Caco-2 (cell line): ENCODE measurements at regions of chr11 and their contacts with region 1.

Region 1: GRCh38 chr11:10076458-10077141 is 217.4 kb downstream of the SBF2 start:
- DNase-seq: peak; percentile 57 to 63
- H3K4me3 ChIP-seq: no peak overlapping the region
- H3K4me3 Mint-ChIP-seq: no peak overlapping the region
- H3K27ac Mint-ChIP-seq: no peak overlapping the region
- H3K4me1 ChIP-seq: no peaks in the 10 kb centered on the region
- H3K4me1 Mint-ChIP-seq: peaks cover 5% of the 10 kb centered on the region
- H3K27me3 ChIP-seq: no peaks in the 10 kb centered on the region
- H3K27me3 Mint-ChIP-seq: no peaks in the 10 kb centered on the region
- CTCF ChIP-seq: peak; percentile 75 to 88

Region 2: GRCh38 chr11:8754241-8754640 is 1322.4 kb before region 1 on chr11:
- CTCF ChIA-PET with region 1: no interaction called
- POLR2A ChIA-PET with region 1: interaction called, 21 read pairs
- intact Hi-C with region 1: no loop called
- DNase-seq: no peak
- H3K4me3 ChIP-seq: no peak overlapping the region
- H3K4me3 Mint-ChIP-seq: no peak overlapping the region
- H3K27ac Mint-ChIP-seq: no peak overlapping the region
- H3K4me1 ChIP-seq: peaks cover 33% of the 10 kb centered on the region
- H3K4me1 Mint-ChIP-seq: peaks cover 17% of the 10 kb centered on the region
- H3K27me3 ChIP-seq: no peaks in the 10 kb centered on the region
- H3K27me3 Mint-ChIP-seq: no peaks in the 10 kb centered on the region
- CTCF ChIP-seq: no peak

Region 3: GRCh38 chr11:9861860-9862725 is 214.5 kb before region 1 on chr11:
- CTCF ChIA-PET with region 1: interaction called, 3 read pairs
- POLR2A ChIA-PET with region 1: no interaction called
- intact Hi-C with region 1: loop called (anchors 10 kb)
- DNase-seq: peak; percentile 77 to 82
- H3K4me3 ChIP-seq: no peak overlapping the region
- H3K4me3 Mint-ChIP-seq: no peak overlapping the region
- H3K27ac Mint-ChIP-seq: no peak overlapping the region
- H3K4me1 ChIP-seq: peaks cover 60% of the 10 kb centered on the region
- H3K4me1 Mint-ChIP-seq: peaks cover 41% of the 10 kb centered on the region
- H3K27me3 ChIP-seq: no peaks in the 10 kb centered on the region
- H3K27me3 Mint-ChIP-seq: no peaks in the 10 kb centered on the region
- CTCF ChIP-seq: peak; percentile 77 to 87

Region 4: DNA sequence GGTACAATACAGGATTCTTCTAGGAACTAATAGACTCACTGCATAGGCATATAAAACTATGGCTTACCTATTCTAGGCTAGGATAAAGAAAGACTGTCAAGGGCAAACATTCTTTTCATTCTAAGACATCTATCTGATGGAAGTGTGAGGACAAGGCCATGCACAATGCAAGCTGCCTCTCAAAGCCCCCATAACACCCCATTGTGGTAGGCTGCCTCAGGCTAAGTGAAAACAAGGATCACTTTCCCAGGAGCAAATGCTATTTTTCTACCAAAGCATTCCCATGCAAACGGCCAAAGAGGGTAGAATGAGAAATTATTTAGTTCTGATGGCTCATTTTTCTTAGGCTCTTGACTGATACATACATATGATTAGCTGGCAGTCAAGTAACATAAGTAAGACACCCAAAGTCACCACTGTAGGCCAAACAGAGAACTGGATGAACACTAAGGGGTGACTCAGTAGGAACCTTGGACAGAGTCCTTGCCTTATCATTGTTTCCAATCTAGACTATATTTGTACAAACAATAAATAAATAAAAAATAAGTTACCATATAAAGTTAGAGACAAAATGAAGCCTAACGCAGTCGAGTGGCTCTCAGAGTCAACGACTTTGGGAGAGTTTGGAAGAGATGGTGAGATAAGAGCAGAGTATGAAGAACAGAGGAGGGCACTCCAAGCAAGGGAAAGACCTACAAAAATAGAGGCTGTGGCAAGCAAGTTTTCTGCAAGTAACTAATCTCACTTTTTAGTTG is 86.2 kb before region 1 on chr11:
- CTCF ChIA-PET with region 1: no interaction called
- POLR2A ChIA-PET with region 1: no interaction called
- intact Hi-C with region 1: loop called (anchors 2 kb)
- DNase-seq: peak in 1 of 2 experiments; percentile 17
- H3K4me3 ChIP-seq: no peak overlapping the region
- H3K4me3 Mint-ChIP-seq: no peak overlapping the region
- H3K27ac Mint-ChIP-seq: no peak overlapping the region
- H3K4me1 ChIP-seq: no peaks in the 10 kb centered on the region
- H3K4me1 Mint-ChIP-seq: no peaks in the 10 kb centered on the region
- H3K27me3 ChIP-seq: no peaks in the 10 kb centered on the region
- H3K27me3 Mint-ChIP-seq: no peaks in the 10 kb centered on the region
- CTCF ChIP-seq: peak in 1 of 2 experiments; percentile 43

Region 5: DNA sequence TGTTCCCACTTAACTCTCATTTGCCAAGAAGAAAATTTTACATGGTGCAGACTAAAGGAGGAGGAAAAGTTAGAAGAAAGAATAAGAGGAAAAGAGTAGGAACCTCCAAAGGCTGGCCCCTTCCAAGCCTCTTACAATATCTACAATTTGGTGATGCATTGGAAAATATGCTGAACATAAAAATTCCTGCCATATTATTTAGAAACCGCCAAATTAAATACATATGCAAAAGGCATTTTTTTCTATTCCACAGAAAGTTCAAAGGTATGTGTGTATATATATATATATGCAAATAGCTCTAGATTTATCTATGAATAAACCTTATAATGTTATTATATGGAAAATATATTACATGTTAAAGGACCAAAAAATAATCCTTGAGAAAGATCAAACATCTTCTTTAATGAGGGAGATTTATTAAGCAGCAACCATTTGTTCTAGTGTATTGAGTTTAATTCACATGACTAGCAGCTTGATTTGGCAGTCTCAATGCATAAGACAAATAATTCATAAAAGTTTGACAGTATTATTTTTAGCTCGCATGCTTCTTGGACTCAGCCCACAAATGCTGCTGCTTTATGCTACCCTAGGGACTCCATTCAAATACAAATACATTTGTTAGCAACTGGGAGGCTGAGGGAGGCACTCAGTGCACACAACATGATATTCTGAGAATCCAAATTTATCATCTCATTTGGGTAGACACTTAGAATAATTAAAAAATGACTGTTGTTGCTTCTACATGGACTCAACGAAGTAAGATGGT is 32.5 kb after region 1 on chr11:
- CTCF ChIA-PET with region 1: no interaction called
- POLR2A ChIA-PET with region 1: no interaction called
- intact Hi-C with region 1: no loop called
- DNase-seq: no peak
- H3K4me3 ChIP-seq: no peak overlapping the region
- H3K4me3 Mint-ChIP-seq: no peak overlapping the region
- H3K27ac Mint-ChIP-seq: no peak overlapping the region
- H3K4me1 ChIP-seq: no peaks in the 10 kb centered on the region; the same call in 1 of the 2 replicates
- H3K4me1 Mint-ChIP-seq: peaks cover 11% of the 10 kb centered on the region
- H3K27me3 ChIP-seq: no peaks in the 10 kb centered on the region
- H3K27me3 Mint-ChIP-seq: no peaks in the 10 kb centered on the region
- CTCF ChIP-seq: no peak

Region 6: GRCh38 chr11:10181811-10182210 is 105.2 kb after region 1 on chr11:
- CTCF ChIA-PET with region 1: no interaction called
- POLR2A ChIA-PET with region 1: no interaction called
- intact Hi-C with region 1: loop called (anchors 2 kb)
- DNase-seq: no peak
- H3K4me3 ChIP-seq: no peak overlapping the region
- H3K4me3 Mint-ChIP-seq: no peak overlapping the region
- H3K27ac Mint-ChIP-seq: no peak overlapping the region
- H3K4me1 ChIP-seq: no peaks in the 10 kb centered on the region; the same call in 1 of the 2 replicates
- H3K4me1 Mint-ChIP-seq: no peaks in the 10 kb centered on the region
- H3K27me3 ChIP-seq: no peaks in the 10 kb centered on the region
- H3K27me3 Mint-ChIP-seq: no peaks in the 10 kb centered on the region
- CTCF ChIP-seq: peak; percentile 14 to 22